K562 (cell line): ENCODE measurements at regions of chr9 and their contacts with region 1.

Region 1: DNA sequence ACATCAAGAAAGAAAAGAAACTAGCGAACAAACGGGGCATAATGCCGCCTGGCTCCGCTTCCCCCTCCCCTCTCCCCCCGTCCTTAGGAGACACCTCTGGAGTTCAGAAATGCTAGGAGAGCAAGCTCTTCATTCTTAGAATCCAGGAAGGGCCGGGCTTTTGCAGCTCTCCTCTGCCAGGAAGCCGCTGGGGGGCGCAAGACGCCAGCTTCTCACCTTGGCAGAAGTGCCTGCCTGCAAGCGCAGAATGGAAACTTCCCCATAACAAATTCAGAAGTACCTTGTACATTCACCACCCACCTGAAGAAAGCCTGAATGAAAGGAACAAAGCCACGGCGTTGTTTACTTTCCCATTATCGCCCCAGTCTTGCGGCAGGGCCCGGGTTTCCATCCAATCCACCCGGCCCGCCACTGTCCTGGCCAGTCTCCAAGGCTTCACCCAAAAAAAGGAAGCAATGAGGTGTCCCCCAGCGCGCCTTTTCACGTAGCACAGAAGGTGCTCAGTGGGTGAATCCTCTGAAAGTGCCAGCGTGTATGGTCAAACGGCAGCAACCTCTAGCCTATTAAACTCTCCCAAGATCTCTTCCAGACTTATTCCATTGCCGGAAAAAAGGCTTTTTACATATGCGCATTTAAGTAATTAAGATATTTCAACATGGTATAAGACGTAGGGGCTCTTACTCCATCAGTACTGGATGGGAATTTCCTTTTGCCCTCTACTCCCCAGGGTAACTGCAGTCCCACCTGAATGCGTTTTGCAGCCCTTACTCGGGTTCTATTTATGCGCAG is 1.6 kb upstream of the GADD45G start:
- DNase-seq: peak; percentile 33 to 81 (median 38)
- ATAC-seq: peak; percentile 66
- H3K4me3 ChIP-seq: no peak overlapping the region
- H3K27ac ChIP-seq: no peak overlapping the region
- H3K4me1 ChIP-seq: peaks cover 10 to 31% of the 10 kb centered on the region in 2 experiments; a peak in 4 of 5 replicates
- H3K27me3 ChIP-seq: no peaks in the 10 kb centered on the region
- CTCF ChIP-seq: peak; percentile 76 to 79 (median 76)
- EP300 ChIP-seq: no peak
- POLR2A ChIP-seq: no peak
- RAD21 ChIP-seq: peak; percentile 78 to 82

Region 2: GRCh38 chr9:89661956-89662717 is 59.0 kb after region 1 on chr9:
- CTCF ChIA-PET with region 1: no interaction called
- POLR2A ChIA-PET with region 1: no interaction called
- in situ Hi-C with region 1: no loop called
- intact Hi-C with region 1: loop called (anchors 10 kb)
- DNase-seq: peak; percentile 24 to 65 (median 59)
- ATAC-seq: peak; percentile 85
- H3K4me3 ChIP-seq: no peak overlapping the region
- H3K27ac ChIP-seq: no peak overlapping the region
- H3K4me1 ChIP-seq: no peaks in the 10 kb centered on the region; a peak in 1 of 5 replicates
- H3K27me3 ChIP-seq: peaks cover 3 to 21% of the 10 kb centered on the region in 2 experiments; a peak in 3 of 5 replicates
- CTCF ChIP-seq: no peak
- EP300 ChIP-seq: no peak
- POLR2A ChIP-seq: no peak
- RAD21 ChIP-seq: no peak

Region 3: GRCh38 chr9:89732295-89732938 is 129.2 kb after region 1 on chr9:
- CTCF ChIA-PET with region 1: interaction called, 4 read pairs
- POLR2A ChIA-PET with region 1: no interaction called
- in situ Hi-C with region 1: no loop called
- intact Hi-C with region 1: loop called (anchors 10 kb)
- DNase-seq: no peak
- ATAC-seq: no peak
- H3K4me3 ChIP-seq: no peak overlapping the region
- H3K27ac ChIP-seq: no peak overlapping the region
- H3K4me1 ChIP-seq: no peaks in the 10 kb centered on the region
- H3K27me3 ChIP-seq: peaks cover 0 to 4% of the 10 kb centered on the region in 2 experiments; a peak in 2 of 5 replicates
- CTCF ChIP-seq: no peak
- EP300 ChIP-seq: no peak
- POLR2A ChIP-seq: no peak
- RAD21 ChIP-seq: no peak

Region 4: DNA sequence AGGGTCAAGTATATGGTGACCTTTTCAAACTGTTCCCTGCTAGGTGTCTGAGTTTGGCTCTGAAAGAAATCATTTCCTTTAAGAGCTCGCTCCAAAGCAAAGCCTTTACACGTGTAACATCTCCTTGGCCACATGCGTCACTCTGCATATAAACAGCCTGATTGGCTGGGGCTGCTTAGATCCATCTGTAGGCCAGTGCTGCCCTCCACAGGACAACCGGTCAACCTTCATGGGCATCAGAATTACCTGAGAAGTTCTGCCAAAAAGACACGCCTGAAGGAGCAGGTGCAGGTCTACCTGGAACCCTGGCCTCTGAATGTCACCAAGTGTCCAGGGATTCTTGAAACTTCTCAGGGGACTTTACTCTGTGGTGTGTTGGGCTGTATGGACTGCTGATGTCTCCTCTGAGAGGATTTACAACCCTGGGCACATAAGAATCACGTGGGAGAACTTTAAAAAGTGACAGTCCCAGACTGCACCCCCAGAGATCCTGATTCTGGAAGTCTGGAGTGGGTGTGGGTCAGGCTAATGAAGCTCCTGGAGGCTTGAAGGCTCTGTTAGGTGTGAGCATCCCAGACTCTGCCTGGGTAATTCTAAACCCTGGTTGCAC is 499.2 kb after region 1 on chr9:
- CTCF ChIA-PET with region 1: interaction called, 11 read pairs
- POLR2A ChIA-PET with region 1: no interaction called
- in situ Hi-C with region 1: loop called (anchors 5 kb)
- intact Hi-C with region 1: loop called (anchors 1 kb)
- DNase-seq: peak; percentile 62 to 72 (median 68)
- ATAC-seq: peak; percentile 96
- H3K4me3 ChIP-seq: no peak overlapping the region
- H3K27ac ChIP-seq: no peak overlapping the region
- H3K4me1 ChIP-seq: no peaks in the 10 kb centered on the region
- H3K27me3 ChIP-seq: no peaks in the 10 kb centered on the region; a peak in 1 of 5 replicates
- CTCF ChIP-seq: peak; percentile 53 to 67 (median 60)
- EP300 ChIP-seq: no peak
- POLR2A ChIP-seq: no peak
- RAD21 ChIP-seq: peak; percentile 60 to 70